Mammary epithelial cell (primary cell): ENCODE measurements at regions of chr7 and their contacts with region 1.

Region 1: GRCh38 chr7:102390697-102391484 is 5.3 kb upstream of the PRKRIP1 start:
- DNase-seq: peak; percentile 52
- H3K4me3 ChIP-seq: no peak overlapping the region
- H3K27ac ChIP-seq: no peak overlapping the region
- H3K4me1 ChIP-seq: no peaks in the 10 kb centered on the region
- H3K27me3 ChIP-seq: no peaks in the 10 kb centered on the region
- CTCF ChIP-seq: peak; percentile 84 to 95

Region 2: DNA sequence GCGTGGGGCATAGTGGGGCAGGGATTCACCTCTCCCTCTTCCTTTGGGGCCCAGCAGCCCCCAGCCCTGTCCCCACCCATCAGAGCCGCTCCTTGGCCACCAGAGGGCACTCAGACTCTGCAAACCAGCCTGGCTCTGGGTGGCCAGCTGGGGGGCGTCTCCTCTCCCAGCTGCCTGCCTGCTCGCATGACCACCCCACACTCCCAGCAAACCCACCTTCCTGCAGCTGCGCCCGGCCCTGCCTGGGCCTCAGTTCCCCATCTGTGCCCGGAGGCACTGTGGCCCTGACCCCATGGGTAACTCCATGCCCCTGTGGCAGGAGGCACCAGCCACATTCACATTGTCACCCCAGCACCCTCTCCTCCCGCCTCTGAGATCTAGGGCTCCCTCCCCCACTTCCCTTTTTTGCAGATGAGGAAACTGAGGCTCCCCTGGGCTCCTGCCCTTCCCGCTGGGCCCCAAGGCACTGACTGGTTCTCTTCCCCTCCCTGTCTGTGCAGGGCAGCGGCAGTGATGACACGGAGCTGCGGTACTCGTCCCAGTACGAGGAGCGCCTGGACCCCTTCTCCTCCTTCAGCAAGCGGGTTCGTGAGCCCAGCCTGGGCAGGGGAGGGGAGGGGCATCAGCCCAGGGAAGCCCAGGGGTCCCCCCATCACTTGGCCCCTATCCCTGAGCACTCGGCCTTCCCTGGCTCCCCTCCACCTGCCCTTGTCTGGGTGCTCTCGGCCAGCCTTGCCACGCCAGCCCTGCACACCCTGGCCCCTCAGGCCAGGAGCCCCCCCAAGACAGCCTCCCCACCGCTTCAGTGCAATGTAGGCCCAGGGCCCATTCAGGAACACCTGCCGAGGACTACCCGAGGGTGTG is 111.1 kb before region 1 on chr7:
- CTCF ChIA-PET with region 1: no interaction called
- dilution Hi-C with region 1: no loop called
- in situ Hi-C with region 1: loop called in 1 of 2 experiments (anchors 5 kb)
- intact Hi-C with region 1: loop called (anchors 1 kb)
- DNase-seq: peak; percentile 15
- H3K4me3 ChIP-seq: no peak overlapping the region
- H3K27ac ChIP-seq: no peak overlapping the region
- H3K4me1 ChIP-seq: no peaks in the 10 kb centered on the region
- H3K27me3 ChIP-seq: no peaks in the 10 kb centered on the region
- CTCF ChIP-seq: peak; percentile 57 to 91

Region 3: GRCh38 chr7:102286237-102287110 is 104.4 kb before region 1 on chr7 and contains the start of gene SH2B2:
- CTCF ChIA-PET with region 1: no interaction called
- dilution Hi-C with region 1: loop called (anchors 5 kb)
- in situ Hi-C with region 1: loop called (anchors 5 kb)
- intact Hi-C with region 1: no loop called
- DNase-seq: peak; percentile 32
- H3K4me3 ChIP-seq: peak within 1 kb of the TSS; percentile 72 to 83 (median 80)
- H3K27ac ChIP-seq: no peak within 1 kb of the TSS
- H3K4me1 ChIP-seq: peaks cover 12% of the 10 kb centered on the region
- H3K27me3 ChIP-seq: no peaks in the 10 kb centered on the region
- CTCF ChIP-seq: no peak
- total RNA-seq, gene SH2B2: 3.0 to 3.4 TPM